AG04449 (cell line): ENCODE measurements at regions of chr11 and their contacts with region 1.

Region 1: DNA sequence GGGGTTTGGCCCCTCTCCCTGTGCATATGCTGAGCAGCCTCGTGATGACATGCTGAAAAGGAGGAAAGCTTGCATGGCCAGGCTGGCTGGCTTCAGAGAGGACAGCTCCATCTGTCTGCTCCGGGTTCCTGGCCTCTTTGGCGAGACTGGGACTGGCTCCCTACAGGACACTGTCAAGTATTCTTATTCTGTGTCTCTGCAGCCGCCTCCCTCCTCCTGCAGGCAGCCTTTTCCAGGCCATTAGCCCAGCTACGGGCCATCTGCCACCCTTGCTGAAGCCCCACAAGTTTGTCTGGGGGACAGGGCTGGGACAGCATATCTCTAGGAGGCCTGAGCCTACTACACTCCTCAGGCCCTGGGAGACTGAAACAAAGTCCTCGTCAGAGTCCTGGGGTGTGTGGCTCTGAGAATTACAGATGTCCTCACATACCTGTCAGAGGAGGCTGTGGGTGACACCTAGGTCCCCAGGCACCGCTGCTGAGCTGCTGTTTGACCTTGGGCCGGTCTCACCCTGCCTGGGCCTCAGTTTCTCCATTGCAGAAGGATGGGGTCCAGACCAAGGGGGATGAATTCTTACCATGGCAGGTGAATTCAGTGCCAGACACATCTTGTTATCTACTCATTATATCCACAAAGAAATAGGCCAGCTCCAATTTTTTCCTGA is 11.0 kb downstream of the MRGPRG start:
- DNase-seq: no peak
- H3K4me3 ChIP-seq: no peak overlapping the region
- CTCF ChIP-seq: no peak

Region 2: DNA sequence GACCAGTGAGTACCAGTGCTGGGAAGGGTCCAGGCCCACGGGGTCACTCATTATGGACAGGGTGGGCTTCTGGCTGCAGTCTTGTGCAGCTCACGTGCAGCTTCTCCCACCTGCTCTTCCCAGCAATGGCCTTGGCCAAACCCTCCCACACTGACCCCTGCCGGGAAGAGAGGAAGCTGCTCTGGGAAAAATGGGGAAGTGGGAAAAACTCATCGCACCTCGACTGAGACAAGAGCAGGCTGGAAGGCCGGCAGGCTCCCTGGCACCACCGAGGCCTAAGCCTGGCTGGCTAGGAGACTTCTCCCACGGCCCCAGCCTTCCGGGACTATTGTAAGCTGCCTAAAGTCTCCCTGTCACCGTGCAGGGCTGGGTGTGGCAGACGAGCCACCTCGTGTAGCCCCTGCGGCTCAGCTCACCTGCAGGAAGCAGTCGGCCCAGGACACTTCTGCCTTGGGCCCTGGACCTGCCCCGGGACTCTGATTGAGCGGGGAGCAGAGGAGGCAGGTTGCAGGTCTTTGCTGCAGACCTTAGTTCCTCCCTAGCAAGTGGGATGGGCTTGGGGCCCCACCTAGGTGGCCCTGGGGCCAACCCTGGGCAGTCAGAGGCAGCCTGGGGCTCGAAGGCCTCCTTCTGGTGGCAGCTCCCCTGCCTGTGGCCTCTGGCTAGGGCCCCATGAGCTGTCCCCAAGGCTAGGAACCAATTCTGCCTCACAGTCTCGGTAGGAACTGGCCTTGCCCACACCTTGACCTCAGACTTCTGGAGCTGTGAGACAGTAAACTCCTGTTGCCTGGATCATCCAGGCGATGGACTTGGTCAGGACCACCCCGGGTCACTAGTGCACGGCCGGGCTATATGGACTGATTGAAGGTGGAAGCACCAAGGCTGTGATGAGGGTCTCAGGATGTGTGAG is 12.2 kb before region 1 on chr11:
- CTCF ChIA-PET with region 1: interaction called, 11 read pairs
- POLR2A ChIA-PET with region 1: no interaction called
- DNase-seq: no peak
- H3K4me3 ChIP-seq: no peak overlapping the region
- CTCF ChIP-seq: peak; percentile 38

Region 3: GRCh38 chr11:3231855-3232744 is 24.4 kb after region 1 on chr11 and contains the start of gene MRGPRE:
- CTCF ChIA-PET with region 1: no interaction called
- POLR2A ChIA-PET with region 1: no interaction called
- DNase-seq: no peak
- H3K4me3 ChIP-seq: no peak within 1 kb of the TSS
- CTCF ChIP-seq: no peak

Region 4: DNA sequence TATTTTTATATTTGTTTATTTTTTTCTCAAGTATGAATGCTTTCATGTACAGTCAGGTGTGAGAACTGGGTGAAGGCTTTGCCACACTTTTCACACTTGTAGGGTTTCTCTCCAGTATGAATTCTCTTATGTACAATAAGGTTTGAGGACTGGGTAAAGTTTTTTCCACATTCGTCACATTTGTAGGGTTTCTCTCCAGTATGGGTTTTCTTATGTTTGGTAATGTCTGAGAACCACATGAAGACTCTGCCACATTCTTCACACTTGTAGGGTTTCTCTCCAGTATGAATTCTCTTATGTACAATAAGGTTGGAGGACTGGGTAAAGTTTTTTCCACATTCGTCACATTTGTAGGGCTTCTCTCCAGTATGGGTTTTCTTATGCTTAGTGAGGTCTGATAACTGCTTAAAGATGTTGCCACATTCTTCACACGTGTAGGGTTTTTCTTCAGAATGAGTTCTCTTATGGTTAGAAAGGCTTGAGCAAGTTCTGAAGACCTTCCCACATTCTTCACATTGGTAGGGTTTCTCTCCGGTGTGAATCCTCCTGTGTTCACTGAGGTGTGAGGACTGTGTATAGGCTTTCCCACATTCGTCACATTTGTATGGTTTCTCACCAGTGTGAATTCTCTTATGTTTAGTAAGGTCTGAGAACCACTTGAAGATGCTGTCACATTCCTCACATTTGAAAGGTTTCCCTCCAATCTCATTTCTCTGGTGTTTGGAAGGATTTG is 151.6 kb after region 1 on chr11:
- CTCF ChIA-PET with region 1: no interaction called
- POLR2A ChIA-PET with region 1: no interaction called
- DNase-seq: no peak
- H3K4me3 ChIP-seq: no peak overlapping the region
- CTCF ChIP-seq: no peak